ENCODE measurements at regions of chr15 and their contacts with region 1.

Region 1: DNA sequence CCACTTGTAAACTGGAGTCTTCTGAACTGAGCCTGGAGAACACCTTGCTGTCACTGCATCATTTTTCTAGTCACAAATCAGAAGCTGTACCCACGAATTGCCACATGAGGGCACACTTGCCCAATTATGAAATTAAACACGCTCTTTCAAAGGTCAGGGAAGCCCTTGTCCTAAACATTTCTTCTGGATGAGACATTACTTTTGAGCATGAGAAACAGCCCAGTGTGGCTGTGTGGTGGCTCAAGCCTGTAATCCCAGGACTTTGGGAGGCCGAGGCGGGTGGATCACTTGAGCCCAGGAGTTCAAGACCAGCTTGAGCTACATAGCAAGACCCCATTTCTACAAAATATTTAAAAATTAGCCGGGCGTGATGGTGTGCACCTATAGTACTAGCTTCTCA is 27.5 kb upstream of the CFAP161 start:
- DNase-seq: peak; percentile 33 to 82 (median 58)
- H3K4me3 ChIP-seq: no peak overlapping the region
- H3K27ac ChIP-seq: no peak overlapping the region
- H3K4me1 ChIP-seq: no peaks in the 10 kb centered on the region
- H3K27me3 ChIP-seq: peaks cover 2% of the 10 kb centered on the region
- CTCF ChIP-seq: peak; percentile 54 to 82 (median 76)
- POLR2A ChIP-seq: no peak

Region 2: DNA sequence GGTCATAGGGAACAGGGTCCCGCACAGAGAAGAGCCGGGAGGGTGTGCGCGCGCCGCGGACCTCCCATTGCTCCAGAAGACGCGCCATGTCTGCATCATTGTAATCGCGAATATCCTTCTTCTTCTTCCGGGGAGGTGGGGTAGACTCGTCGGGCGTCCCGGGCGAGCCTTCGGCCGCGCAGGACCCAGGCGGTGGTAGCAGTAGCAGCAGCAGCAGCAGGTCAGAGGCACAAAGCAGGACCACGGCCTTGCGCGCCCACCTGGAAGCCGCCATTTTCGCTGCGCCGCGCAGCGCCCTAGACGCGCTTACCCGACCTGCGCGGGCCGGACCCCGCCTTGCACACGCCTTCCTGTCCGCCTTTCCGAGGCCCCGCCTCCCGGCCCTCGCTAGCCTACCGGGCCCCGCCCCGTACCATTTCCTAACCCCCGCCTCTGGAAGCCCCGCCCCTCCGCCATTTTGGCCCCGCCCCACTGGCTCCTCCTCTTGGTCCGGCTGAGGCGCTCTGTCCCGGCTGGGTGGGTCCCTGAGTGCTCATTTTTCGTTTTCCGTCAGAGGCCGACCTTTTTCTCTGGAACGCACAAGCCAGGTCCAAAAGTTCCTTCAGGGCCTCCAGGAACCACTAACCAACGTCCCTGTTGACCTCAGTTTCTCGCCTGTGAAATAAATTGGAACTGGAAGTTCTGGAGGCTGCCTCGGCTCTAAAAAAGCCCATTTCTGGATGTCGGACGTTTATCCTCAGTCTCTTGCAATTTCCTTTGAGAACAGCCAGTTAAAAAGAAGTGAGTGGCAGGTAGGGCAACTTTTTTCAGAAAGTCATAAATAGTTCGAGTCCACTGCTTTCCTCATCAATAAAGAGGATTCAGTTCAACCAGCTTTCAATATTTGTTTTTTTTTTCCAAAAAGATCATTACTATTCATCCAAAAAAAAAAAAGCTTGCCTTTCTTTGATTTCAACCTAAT is 116.8 kb before region 1 on chr15 and contains the start of gene MESD:
- intact Hi-C with region 1: loop called in 1 of 2 experiments (anchors 10 kb)
- DNase-seq: peak; percentile 97 to 99 (median 98)
- H3K4me3 ChIP-seq: peak within 1 kb of the TSS; percentile 58 to 86 (median 74)
- H3K27ac ChIP-seq: peak within 1 kb of the TSS; percentile 86 to 94 (median 89)
- H3K4me1 ChIP-seq: peaks cover 21 to 36% of the 10 kb centered on the region in 2 donors
- H3K27me3 ChIP-seq: no peaks in the 10 kb centered on the region
- CTCF ChIP-seq: no peak
- POLR2A ChIP-seq: peak; percentile 77 to 95
- total RNA-seq, gene MESD: 13.2 to 50.3 (median 25.9) TPM

Region 3: DNA sequence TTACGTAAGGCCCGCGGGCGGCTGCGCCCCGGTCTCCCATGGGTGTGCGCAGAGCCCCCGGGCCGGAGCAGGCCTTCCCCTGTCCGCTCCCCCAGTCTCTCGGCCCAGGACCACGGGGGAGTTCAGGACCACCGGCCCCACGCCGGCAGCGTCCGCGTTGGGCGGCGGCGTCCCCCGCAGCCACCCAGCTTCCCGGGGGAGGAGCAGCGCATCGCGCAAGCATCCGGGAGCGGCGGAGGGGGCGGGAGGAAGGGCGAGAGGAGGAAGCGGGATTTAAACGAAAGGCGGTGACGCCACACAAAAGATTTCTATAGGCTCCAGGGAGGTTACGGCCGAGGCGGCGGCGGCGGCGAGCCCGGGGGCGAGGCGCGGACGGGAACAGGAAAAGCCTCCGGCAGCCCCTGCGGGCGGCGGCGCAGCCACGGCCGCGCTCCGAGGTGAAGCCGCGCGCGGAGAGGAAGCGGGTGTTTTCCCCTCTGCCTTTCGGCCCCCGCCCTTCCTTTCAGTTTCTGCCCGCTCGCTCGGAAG is 105.9 kb before region 1 on chr15 and contains the start of gene TLNRD1:
- intact Hi-C with region 1: loop called (anchors 10 kb)
- DNase-seq: peak; percentile 87 to 93 (median 89)
- H3K4me3 ChIP-seq: peak within 1 kb of the TSS; percentile 32 to 98 (median 63)
- H3K27ac ChIP-seq: peak within 1 kb of the TSS; percentile 92 to 99 (median 97)
- H3K4me1 ChIP-seq: peaks cover 4 to 46% of the 10 kb centered on the region in 2 donors
- H3K27me3 ChIP-seq: no peaks in the 10 kb centered on the region
- CTCF ChIP-seq: no peak
- POLR2A ChIP-seq: peak; percentile 74 to 83
- total RNA-seq, gene TLNRD1: 5.3 to 30.8 (median 22.2) TPM

Region 4: DNA sequence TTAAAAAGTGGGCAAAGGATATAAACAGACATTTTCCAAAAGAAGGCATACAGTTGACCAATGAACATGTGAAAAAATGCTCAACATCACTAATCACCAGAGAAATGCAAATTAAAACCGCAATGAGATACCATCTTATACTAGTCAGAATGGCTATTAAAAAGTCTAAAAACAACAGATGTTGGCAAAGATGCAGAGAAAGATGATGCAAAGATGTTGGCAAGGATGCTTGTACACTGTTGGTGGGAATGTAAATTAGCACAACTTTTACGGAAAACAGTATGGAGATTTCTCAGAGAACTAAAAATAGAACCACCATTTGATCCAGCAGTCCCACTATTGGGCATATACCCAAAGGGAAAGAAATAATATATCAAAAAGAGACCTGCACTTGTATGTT is 52.3 kb before region 1 on chr15:
- intact Hi-C with region 1: no loop called
- DNase-seq: no peak
- H3K4me3 ChIP-seq: no peak overlapping the region
- H3K27ac ChIP-seq: no peak overlapping the region
- H3K4me1 ChIP-seq: no peaks in the 10 kb centered on the region
- H3K27me3 ChIP-seq: no peaks in the 10 kb centered on the region
- CTCF ChIP-seq: no peak
- POLR2A ChIP-seq: no peak

Region 5: GRCh38 chr15:81152339-81152738 is 45.8 kb after region 1 on chr15:
- intact Hi-C with region 1: loop called in 1 of 2 experiments (anchors 5 kb)
- DNase-seq: no peak
- H3K4me3 ChIP-seq: no peak overlapping the region
- H3K27ac ChIP-seq: no peak overlapping the region
- H3K4me1 ChIP-seq: no peaks in the 10 kb centered on the region
- H3K27me3 ChIP-seq: no peaks in the 10 kb centered on the region
- CTCF ChIP-seq: no peak
- POLR2A ChIP-seq: no peak

Region 6: DNA sequence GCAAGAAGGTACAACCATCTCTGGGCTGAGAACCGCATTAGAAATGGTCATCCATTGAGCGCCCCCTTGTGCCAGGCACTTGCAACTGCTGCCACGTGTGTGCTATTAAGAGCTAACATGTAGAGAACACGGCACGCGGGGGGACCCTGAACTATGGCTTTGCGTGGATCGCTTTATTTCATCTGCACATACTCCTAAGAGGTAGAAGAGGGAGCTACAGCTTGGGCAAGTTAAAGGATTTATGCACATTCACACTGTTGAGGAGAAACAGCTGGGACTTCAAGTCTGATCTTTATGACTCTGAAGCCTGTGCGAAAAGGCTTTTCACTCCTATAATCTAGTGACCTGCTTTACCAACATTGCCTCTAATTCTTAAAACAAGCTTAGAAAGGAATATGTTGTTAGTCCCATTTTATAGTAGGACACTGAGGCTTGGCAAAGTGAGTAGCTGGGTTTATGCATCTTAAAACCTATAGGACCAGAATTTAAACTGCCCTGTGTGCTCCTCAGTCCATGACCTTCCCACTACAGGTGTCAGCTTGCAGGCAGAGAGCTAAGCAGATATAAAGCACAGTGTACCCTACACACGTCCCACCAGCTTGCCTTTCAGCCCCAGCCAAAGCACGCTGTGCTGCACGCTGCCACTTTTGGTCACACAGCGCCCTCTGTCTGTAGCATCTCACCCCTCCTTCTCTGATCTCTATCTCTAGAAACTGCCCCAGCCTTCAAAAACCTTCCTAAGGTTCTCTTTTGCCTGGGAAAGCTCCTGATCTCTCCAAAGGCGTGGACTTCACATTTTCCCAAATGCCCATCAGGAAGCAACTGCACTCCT is 159.6 kb after region 1 on chr15:
- intact Hi-C with region 1: loop called (anchors 2 to 10 kb)
- DNase-seq: peak; percentile 66 to 91 (median 83)
- H3K4me3 ChIP-seq: no peak overlapping the region
- H3K27ac ChIP-seq: no peak overlapping the region
- H3K4me1 ChIP-seq: peaks cover 0 to 3% of the 10 kb centered on the region in 2 donors
- H3K27me3 ChIP-seq: no peaks in the 10 kb centered on the region
- CTCF ChIP-seq: peak; percentile 74 to 90 (median 80)
- POLR2A ChIP-seq: no peak

Region 7: GRCh38 chr15:81336568-81336967 is 230.0 kb after region 1 on chr15:
- intact Hi-C with region 1: loop called in 1 of 2 experiments (anchors 10 kb)
- DNase-seq: peak in 1 of 7 donors; percentile 12
- H3K4me3 ChIP-seq: no peak overlapping the region
- H3K27ac ChIP-seq: no peak overlapping the region
- H3K4me1 ChIP-seq: peaks cover 0 to 18% of the 10 kb centered on the region in 2 donors
- H3K27me3 ChIP-seq: no peaks in the 10 kb centered on the region
- CTCF ChIP-seq: peak in 3 of 6 experiments; percentile 10 to 23 (median 12)
- POLR2A ChIP-seq: no peak

Measured in adrenal gland (tissue), 19 donors.